Motor neuron (in vitro differentiated cells): ENCODE measurements at regions of chr18 and their contacts with region 1.

Region 1: DNA sequence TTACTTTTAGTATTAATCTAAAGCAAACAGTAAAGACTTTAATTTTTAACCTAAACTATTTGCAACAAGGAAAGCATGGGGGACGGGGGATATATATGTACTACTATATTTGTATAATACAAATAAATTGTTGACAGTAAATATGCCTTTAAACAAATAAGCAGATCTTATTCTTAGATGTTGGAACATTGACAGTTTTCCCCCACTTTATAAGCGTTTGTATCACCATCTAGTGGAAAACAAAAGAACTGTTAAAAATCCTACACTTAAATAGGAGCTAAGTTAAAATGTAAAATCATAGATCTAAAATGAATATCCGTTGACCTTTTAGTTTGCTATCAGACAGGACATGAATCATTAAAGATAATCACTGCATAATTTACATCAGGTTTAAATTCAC is 50.0 kb downstream of the RBBP8 start:
- ATAC-seq: peak in 2 of 8 experiments; percentile 23 to 53
- H3K4me3 ChIP-seq: no peak overlapping the region
- H3K27ac ChIP-seq: no peak overlapping the region
- H3K4me1 ChIP-seq: no peaks in the 10 kb centered on the region

Region 2: DNA sequence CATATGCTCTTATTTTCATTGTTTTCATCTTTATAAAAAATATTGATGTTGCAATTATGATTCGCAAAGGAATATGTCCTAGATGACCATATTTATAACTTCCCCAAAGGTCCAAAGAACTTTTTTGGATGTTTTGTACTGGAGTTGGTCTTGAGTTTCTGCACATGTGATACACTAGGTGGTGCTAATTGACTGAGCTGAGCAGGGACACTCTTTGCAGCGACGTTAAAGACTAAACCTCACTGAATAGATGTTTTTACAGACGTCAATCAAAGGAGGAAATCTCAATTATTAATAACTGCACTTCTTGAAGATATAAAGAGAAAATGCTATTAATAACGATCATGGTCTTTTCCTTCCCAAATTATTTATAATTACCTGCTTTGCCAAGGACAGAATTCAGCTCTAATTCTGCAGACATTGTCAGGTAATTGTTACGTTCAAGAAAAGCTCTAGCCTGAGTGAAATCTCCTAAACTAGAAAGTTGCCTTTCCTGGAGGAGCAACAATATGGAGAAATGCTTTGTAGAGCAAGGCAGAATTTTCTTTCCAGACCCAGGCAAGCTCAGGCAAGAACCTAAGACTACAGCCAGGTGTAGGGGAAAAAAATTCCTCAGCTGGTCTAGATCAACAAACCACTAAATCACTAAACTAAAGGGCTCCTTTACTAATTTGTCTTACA is 169.4 kb before region 1 on chr18:
- in situ Hi-C with region 1: loop called in 2 of 9 experiments (anchors 25 kb)
- ATAC-seq: peak in 4 of 8 experiments; percentile 45 to 77 (median 56)
- H3K4me3 ChIP-seq: no peak overlapping the region
- H3K27ac ChIP-seq: no peak overlapping the region
- H3K4me1 ChIP-seq: no peaks in the 10 kb centered on the region

Region 3: DNA sequence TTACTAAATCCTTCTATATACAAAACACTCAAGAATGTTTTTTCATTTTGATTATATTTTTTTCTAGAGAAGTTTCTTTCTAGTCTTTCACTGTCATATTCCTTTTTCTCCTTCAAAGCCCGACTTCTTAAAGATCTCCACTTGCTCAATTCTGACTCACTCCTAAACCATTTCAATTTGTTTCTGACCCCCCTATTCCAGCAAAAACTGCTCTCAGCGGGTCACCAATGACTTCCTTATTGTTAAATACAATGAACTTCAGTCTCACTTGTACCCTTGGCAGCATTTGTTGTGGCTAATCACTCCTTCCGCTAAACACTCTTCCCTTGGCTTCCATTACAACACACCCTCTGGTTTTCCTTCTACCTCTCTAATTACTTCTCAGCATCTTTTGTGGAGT is 161.2 kb before region 1 on chr18:
- in situ Hi-C with region 1: loop called in 3 of 9 experiments (anchors 10 to 25 kb)
- ATAC-seq: no peak
- H3K4me3 ChIP-seq: no peak overlapping the region
- H3K27ac ChIP-seq: no peak overlapping the region
- H3K4me1 ChIP-seq: no peaks in the 10 kb centered on the region